Endothelial cell of umbilical vein (primary cell): ENCODE measurements at regions of chr15 and their contacts with region 1.

Region 1: GRCh38 chr15:99928429-99928981 is 195.3 kb upstream of the LYSMD4 start:
- DNase-seq: peak; percentile 54
- H3K4me3 ChIP-seq: peak overlapping the region in 2 of 3 experiments; percentile 17 to 61
- H3K27ac ChIP-seq: no peak overlapping the region
- H3K4me1 ChIP-seq: peaks cover 5% of the 10 kb centered on the region
- H3K27me3 ChIP-seq: peaks cover 2 to 4% of the 10 kb centered on the region in 2 experiments
- CTCF ChIP-seq: peak; percentile 31 to 57
- POLR2A ChIP-seq: no peak

Region 2: GRCh38 chr15:99275525-99276128 is 652.9 kb before region 1 on chr15:
- CTCF ChIA-PET with region 1: interaction called, 12 read pairs
- POLR2A ChIA-PET with region 1: no interaction called
- dilution Hi-C with region 1: no loop called
- intact Hi-C with region 1: loop called (anchors 5 kb)
- DNase-seq: no peak
- H3K4me3 ChIP-seq: no peak overlapping the region
- H3K27ac ChIP-seq: no peak overlapping the region
- H3K4me1 ChIP-seq: no peaks in the 10 kb centered on the region
- H3K27me3 ChIP-seq: no peaks in the 10 kb centered on the region
- CTCF ChIP-seq: no peak
- POLR2A ChIP-seq: no peak

Region 3: DNA sequence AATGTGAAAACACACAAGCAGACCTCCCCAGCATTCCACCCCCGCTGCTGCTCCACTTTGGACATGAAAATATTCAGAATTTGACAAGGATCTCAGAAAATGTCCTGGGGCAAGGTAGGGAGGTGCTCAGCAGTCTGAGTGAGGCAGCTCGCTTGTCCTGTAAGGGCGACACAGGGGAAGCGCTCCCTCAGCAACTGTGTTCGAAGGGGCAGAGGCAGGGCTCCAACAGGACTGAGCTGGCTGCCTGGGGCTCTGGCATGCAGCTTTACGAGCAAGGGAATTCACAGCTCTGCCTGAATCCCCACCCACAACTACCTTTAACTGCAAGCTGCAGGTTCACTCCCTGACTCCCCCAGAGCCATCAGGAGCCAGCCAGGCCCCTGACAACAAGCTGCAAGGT is 91.7 kb after region 1 on chr15:
- CTCF ChIA-PET with region 1: no interaction called
- POLR2A ChIA-PET with region 1: no interaction called
- dilution Hi-C with region 1: no loop called
- intact Hi-C with region 1: no loop called
- DNase-seq: no peak
- H3K4me3 ChIP-seq: no peak overlapping the region
- H3K27ac ChIP-seq: no peak overlapping the region
- H3K4me1 ChIP-seq: no peaks in the 10 kb centered on the region
- H3K27me3 ChIP-seq: no peaks in the 10 kb centered on the region
- CTCF ChIP-seq: no peak
- POLR2A ChIP-seq: no peak

Region 4: GRCh38 chr15:100111103-100112060 is 182.9 kb after region 1 on chr15:
- CTCF ChIA-PET with region 1: interaction called, 3 read pairs
- POLR2A ChIA-PET with region 1: no interaction called
- dilution Hi-C with region 1: no loop called
- intact Hi-C with region 1: loop called (anchors 5 kb)
- DNase-seq: peak; percentile 83
- H3K4me3 ChIP-seq: no peak overlapping the region
- H3K27ac ChIP-seq: peak overlapping the region; percentile 56
- H3K4me1 ChIP-seq: peaks cover 31% of the 10 kb centered on the region
- H3K27me3 ChIP-seq: no peaks in the 10 kb centered on the region
- CTCF ChIP-seq: no peak
- POLR2A ChIP-seq: no peak

Region 5: DNA sequence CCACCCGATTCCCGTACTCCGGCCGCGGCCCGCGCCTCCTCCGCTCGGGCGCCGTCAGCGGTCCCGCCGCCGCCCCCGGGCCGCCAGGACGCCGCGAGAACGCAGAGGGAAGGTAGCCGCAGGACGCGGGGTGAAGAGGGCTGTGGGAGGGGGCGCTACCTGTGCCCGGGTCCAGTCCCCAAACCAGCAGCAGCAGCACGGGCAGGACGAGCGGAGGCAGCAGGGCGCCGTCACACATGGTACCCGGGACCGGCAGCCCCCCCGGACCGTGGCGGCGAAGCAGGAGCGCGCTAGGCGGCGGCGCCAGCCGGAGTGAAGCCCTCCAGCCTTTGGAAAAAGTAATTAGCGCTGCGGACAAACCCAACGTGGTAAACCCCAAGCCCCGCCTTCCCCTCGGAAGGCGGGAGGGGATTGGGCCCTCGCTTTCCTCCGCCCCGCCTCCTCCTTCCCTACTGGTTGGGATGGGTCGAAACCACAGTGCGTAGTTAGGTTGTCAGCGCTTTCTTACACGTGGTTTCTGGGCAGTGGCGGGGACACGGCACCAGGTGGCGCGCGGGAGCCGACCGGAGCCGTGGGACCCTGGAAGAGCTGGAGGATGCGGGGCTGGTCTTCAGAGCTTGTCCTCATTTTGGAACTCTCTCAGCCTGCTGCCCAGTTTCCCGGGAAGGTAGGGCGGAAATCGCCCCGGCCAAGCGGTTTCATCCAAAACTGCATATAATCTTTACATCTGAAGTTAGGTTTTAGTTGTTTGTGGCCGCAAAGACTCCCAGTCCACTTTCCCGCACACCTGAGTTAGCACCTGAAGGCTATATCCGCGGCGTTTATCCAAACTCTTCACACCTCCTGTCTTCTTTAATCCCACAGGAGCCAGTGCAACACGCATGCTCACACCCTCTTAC is 413.4 kb after region 1 on chr15 and contains the start of gene ADAMTS17:
- CTCF ChIA-PET with region 1: interaction called, 35 read pairs
- POLR2A ChIA-PET with region 1: no interaction called
- dilution Hi-C with region 1: no loop called
- intact Hi-C with region 1: loop called (anchors 2 kb)
- DNase-seq: peak; percentile 92
- H3K4me3 ChIP-seq: peak within 1 kb of the TSS; percentile 16 to 36 (median 35)
- H3K27ac ChIP-seq: no peak within 1 kb of the TSS
- H3K4me1 ChIP-seq: peaks cover 4% of the 10 kb centered on the region
- H3K27me3 ChIP-seq: peaks cover 2 to 12% of the 10 kb centered on the region in 2 experiments
- CTCF ChIP-seq: peak; percentile 79 to 91
- POLR2A ChIP-seq: no peak
- total RNA-seq, gene ADAMTS17: not detected in 2 replicates

Region 6: GRCh38 chr15:100572362-100572983 is 644.0 kb after region 1 on chr15:
- CTCF ChIA-PET with region 1: interaction called, 25 read pairs
- POLR2A ChIA-PET with region 1: no interaction called
- dilution Hi-C with region 1: no loop called
- intact Hi-C with region 1: loop called (anchors 2 kb)
- DNase-seq: peak; percentile 16
- H3K4me3 ChIP-seq: no peak overlapping the region
- H3K27ac ChIP-seq: no peak overlapping the region
- H3K4me1 ChIP-seq: no peaks in the 10 kb centered on the region
- H3K27me3 ChIP-seq: no peaks in the 10 kb centered on the region
- CTCF ChIP-seq: peak; percentile 4 to 26
- POLR2A ChIP-seq: no peak